Activated naive CD4-positive, alpha-beta T cell treated with anti-CD3 and anti-CD28 coated beads for 36 hours (primary cell): ENCODE measurements at regions of chr12 and their contacts with region 1.

Region 1: GRCh38 chr12:92570056-92570753 is 132.6 kb upstream of the PLEKHG7 start:
- DNase-seq: peak; percentile 67
- H3K4me3 Mint-ChIP-seq: no peak overlapping the region
- H3K27ac Mint-ChIP-seq: no peak overlapping the region
- H3K4me1 Mint-ChIP-seq: peaks cover 32% of the 10 kb centered on the region
- H3K27me3 Mint-ChIP-seq: no peaks in the 10 kb centered on the region

Region 2: DNA sequence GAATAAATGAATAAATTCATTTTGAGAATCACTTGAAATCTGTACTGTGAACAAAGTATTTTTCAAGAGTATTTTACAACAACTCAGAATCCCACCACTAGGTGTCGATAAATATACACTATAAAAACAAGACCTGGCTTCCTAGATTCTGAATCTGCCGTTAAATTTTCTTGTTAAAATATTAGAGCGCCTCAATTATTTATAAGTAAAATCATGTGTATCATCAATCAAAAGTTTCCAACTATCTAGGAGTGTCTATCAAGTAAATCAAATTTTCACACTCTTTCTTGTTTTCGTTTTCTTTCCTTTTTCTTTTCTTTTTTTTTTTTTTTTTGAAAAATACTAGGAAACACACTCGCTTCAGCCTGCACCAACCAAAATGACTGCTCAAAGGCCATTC is 1208.3 kb before region 1 on chr12:
- CTCF ChIA-PET with region 1: no interaction called
- intact Hi-C with region 1: loop called (anchors 1 kb)
- DNase-seq: no peak
- H3K4me3 Mint-ChIP-seq: no peak overlapping the region
- H3K27ac Mint-ChIP-seq: no peak overlapping the region
- H3K4me1 Mint-ChIP-seq: peaks cover 3% of the 10 kb centered on the region
- H3K27me3 Mint-ChIP-seq: no peaks in the 10 kb centered on the region

Region 3: GRCh38 chr12:91811481-91812287 is 758.5 kb before region 1 on chr12:
- CTCF ChIA-PET with region 1: interaction called, 4 read pairs
- intact Hi-C with region 1: loop called (anchors 2 kb)
- DNase-seq: peak; percentile 86
- H3K4me3 Mint-ChIP-seq: peak overlapping the region; percentile 23
- H3K27ac Mint-ChIP-seq: peak overlapping the region; percentile 76
- H3K4me1 Mint-ChIP-seq: peaks cover 21% of the 10 kb centered on the region
- H3K27me3 Mint-ChIP-seq: no peaks in the 10 kb centered on the region

Region 4: GRCh38 chr12:92208613-92209121 is 361.5 kb before region 1 on chr12:
- CTCF ChIA-PET with region 1: no interaction called
- intact Hi-C with region 1: loop called (anchors 1 kb)
- DNase-seq: peak; percentile 42
- H3K4me3 Mint-ChIP-seq: peak overlapping the region; percentile 66
- H3K27ac Mint-ChIP-seq: peak overlapping the region; percentile 86
- H3K4me1 Mint-ChIP-seq: peaks cover 45% of the 10 kb centered on the region
- H3K27me3 Mint-ChIP-seq: no peaks in the 10 kb centered on the region

Region 5: DNA sequence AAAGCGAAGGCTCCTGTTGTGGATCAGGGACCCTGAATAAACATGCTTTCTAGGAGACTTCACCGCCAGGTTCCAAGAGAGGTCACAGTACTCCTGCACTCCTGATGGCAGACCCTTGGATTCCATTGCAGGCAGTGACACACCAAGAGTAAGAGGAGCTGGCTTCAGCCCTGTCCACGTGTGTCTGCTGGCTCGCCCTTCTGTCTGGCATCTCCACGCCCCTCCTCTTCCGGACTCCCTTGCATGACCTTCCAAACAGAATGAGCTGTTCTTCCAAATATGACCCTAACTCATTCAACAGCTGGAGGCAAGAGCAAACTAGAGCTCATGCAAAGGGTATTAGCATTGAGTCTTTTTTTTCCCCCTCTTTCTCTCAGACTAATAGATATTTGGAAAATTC is 100.4 kb before region 1 on chr12:
- CTCF ChIA-PET with region 1: no interaction called
- intact Hi-C with region 1: loop called (anchors 1 kb)
- DNase-seq: no peak
- H3K4me3 Mint-ChIP-seq: no peak overlapping the region
- H3K27ac Mint-ChIP-seq: peak overlapping the region; percentile 89
- H3K4me1 Mint-ChIP-seq: peaks cover 49% of the 10 kb centered on the region
- H3K27me3 Mint-ChIP-seq: no peaks in the 10 kb centered on the region

Region 6: DNA sequence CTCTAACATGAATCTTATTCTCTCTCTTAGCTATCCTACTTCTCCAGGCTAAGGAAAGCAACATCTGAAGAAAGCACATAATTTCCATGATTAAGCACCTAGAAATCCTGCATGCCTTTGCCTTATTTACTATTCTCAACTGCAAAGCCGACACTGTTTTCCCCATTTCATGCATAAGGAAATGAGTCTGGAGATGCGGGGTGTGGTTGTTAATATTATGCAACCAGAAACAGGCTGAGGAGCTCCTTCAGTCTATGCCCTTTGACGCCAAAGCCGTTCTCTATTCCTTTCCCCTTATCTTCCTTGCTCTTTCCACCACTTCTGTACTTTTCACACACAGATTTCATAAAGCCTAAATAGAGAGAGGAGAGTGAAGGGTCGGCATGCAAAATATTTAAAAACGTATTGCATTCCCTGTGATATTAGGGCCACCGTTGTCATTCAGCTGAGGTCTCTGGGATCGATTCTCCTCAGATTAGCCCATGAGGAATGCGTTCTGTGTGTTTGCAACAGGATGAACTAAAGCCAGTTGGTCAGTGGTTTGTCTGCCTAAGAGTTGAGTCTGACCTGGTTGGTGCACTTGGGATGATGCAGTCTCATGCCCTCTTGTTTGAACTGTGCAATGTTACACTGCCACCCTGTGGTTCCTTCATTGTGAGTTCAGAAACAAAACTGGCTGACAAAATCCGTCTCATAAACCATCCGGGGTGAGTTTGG is 79.5 kb after region 1 on chr12:
- CTCF ChIA-PET with region 1: interaction called, 9 read pairs
- intact Hi-C with region 1: loop called (anchors 1 kb)
- DNase-seq: peak; percentile 75
- H3K4me3 Mint-ChIP-seq: no peak overlapping the region
- H3K27ac Mint-ChIP-seq: no peak overlapping the region
- H3K4me1 Mint-ChIP-seq: peaks cover 7% of the 10 kb centered on the region
- H3K27me3 Mint-ChIP-seq: peaks cover 2% of the 10 kb centered on the region

Region 7: GRCh38 chr12:93563807-93564538 is 993.8 kb after region 1 on chr12:
- CTCF ChIA-PET with region 1: no interaction called
- intact Hi-C with region 1: no loop called
- DNase-seq: peak; percentile 15
- H3K4me3 Mint-ChIP-seq: no peak overlapping the region
- H3K27ac Mint-ChIP-seq: no peak overlapping the region
- H3K4me1 Mint-ChIP-seq: no peaks in the 10 kb centered on the region
- H3K27me3 Mint-ChIP-seq: peaks cover 2% of the 10 kb centered on the region